Activated B cell treated with CpG ODN at 0.5 μM for 24 hours (primary cell): ENCODE measurements at regions of chr5 and their contacts with region 1.

Region 1: DNA sequence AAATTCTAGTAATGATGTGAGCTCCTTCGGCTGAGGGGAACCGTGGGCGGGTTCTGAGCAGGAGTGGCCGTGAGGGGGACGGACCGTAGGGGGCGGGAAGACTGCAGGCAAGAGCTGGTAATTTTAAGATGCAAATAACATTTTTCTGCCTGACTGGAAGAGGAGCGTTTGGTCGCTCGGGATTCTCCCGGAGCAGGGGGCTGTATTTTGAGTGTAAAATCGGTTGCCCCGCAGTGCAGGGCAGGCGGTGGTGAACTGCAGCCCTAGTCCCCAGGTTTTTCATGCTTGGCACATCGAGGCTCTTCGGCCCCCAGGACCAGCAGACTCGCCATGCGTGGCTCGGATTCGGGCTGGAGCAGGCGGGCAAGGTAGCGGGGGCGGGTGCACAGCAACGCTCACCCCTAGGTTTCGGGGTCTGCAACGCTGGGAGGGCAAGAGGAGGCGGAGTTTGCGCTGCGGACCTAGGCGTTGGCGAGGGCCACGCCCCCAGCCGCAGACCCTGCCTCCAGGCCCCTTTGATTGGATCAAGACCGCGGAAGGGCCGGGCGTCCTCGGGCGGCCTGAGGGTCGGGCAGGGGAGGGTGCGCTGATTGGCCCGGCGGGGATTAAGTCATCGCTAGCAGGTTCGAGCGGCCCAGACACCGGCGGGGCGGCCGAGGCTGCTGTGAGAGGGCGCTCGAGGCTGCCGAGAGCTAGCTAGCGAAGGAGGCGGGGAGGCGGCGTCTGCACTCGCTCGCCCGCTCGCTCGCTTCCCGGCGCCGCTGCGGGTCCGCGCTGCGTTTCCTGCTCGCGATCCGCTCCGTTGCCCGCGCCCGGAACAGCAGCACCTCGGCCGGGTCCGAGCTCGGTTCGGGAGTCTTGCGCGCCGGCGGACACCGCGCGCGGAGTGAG is at the start of gene ARHGAP26:
- DNase-seq: peak; percentile 89
- ATAC-seq: peak; percentile 95
- H3K4me3 Mint-ChIP-seq: peak within 1 kb of the TSS; percentile 97
- H3K27ac Mint-ChIP-seq: peak within 1 kb of the TSS; percentile 91
- H3K4me1 Mint-ChIP-seq: peaks cover 25% of the 10 kb centered on the region
- H3K27me3 Mint-ChIP-seq: no peaks in the 10 kb centered on the region
- CTCF ChIP-seq: no peak
- total RNA-seq, gene ARHGAP26: 14.0 and 20.9 TPM in 2 replicates

Region 2: GRCh38 chr5:142795251-142795650 is 25.3 kb after region 1 on chr5:
- CTCF ChIA-PET with region 1: interaction called, 11 read pairs
- POLR2A ChIA-PET with region 1: interaction called, 18 read pairs
- intact Hi-C with region 1: loop called (anchors 1 kb)
- DNase-seq: no peak
- ATAC-seq: peak; percentile 79
- H3K4me3 Mint-ChIP-seq: peak overlapping the region; percentile 33
- H3K27ac Mint-ChIP-seq: peak overlapping the region; percentile 87
- H3K4me1 Mint-ChIP-seq: peaks cover 81% of the 10 kb centered on the region
- H3K27me3 Mint-ChIP-seq: no peaks in the 10 kb centered on the region
- CTCF ChIP-seq: no peak

Region 3: GRCh38 chr5:142800776-142801494 is 30.9 kb after region 1 on chr5:
- CTCF ChIA-PET with region 1: interaction called, 11 read pairs
- POLR2A ChIA-PET with region 1: interaction called, 18 read pairs
- intact Hi-C with region 1: loop called (anchors 2 kb)
- DNase-seq: no peak
- ATAC-seq: peak; percentile 78
- H3K4me3 Mint-ChIP-seq: peak overlapping the region; percentile 64
- H3K27ac Mint-ChIP-seq: peak overlapping the region; percentile 84
- H3K4me1 Mint-ChIP-seq: peaks cover 63% of the 10 kb centered on the region
- H3K27me3 Mint-ChIP-seq: no peaks in the 10 kb centered on the region
- CTCF ChIP-seq: no peak

Region 4: DNA sequence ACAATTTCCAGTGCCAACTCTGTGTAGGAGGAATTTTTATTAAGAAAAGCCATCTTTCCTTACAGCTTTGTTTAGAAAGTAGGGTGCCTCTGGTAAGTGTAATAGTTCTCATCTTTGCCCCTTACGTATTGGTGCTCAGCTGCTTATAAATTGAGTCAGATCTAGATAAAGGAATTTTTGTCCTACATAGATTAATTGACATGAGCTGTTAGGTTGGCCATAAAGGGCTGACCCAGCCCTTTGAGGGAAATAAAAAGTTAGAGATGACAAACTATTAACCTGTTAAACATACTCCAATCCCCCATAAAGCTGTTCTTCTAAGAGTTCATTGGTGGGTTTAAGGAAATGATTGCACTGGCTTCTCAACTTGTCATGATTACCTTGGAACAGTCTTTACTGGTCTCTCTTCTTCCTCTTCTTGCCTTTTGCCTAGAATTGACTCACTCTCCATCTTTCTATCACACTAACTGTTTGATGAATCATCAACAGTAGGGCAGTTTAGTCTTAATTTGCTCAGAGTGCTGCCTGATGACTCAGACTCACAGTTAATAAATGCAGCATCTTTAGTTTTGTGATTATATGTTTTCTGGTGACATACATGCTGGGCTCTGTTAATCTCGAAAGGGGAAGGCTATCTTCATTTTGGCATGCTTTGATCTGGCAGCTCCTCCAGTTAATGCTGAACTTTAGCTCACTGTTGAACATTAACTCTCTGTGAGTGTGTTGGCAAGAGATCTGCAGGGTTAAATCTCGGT is 51.9 kb after region 1 on chr5:
- CTCF ChIA-PET with region 1: no interaction called
- POLR2A ChIA-PET with region 1: no interaction called
- intact Hi-C with region 1: loop called (anchors 1 kb)
- DNase-seq: no peak
- ATAC-seq: peak; percentile 95
- H3K4me3 Mint-ChIP-seq: no peak overlapping the region
- H3K27ac Mint-ChIP-seq: no peak overlapping the region
- H3K4me1 Mint-ChIP-seq: peaks cover 5% of the 10 kb centered on the region
- H3K27me3 Mint-ChIP-seq: no peaks in the 10 kb centered on the region
- CTCF ChIP-seq: no peak

Region 5: GRCh38 chr5:144170276-144171024 is 1400.5 kb after region 1 on chr5 and contains the starts of genes KCTD16 and YIPF5:
- CTCF ChIA-PET with region 1: no interaction called
- POLR2A ChIA-PET with region 1: no interaction called
- intact Hi-C with region 1: loop called (anchors 5 kb)
- DNase-seq: peak; percentile 91
- ATAC-seq: peak; percentile 98
- H3K4me3 Mint-ChIP-seq: peak within 1 kb of the TSS; percentile 90
- H3K27ac Mint-ChIP-seq: peak within 1 kb of the TSS; percentile 90
- H3K4me1 Mint-ChIP-seq: peaks cover 29% of the 10 kb centered on the region
- H3K27me3 Mint-ChIP-seq: peaks cover 3% of the 10 kb centered on the region
- CTCF ChIP-seq: no peak
- total RNA-seq, gene KCTD16: not detected in 2 replicates
- total RNA-seq, gene YIPF5: 28.0 and 29.4 TPM in 2 replicates

Region 6: DNA sequence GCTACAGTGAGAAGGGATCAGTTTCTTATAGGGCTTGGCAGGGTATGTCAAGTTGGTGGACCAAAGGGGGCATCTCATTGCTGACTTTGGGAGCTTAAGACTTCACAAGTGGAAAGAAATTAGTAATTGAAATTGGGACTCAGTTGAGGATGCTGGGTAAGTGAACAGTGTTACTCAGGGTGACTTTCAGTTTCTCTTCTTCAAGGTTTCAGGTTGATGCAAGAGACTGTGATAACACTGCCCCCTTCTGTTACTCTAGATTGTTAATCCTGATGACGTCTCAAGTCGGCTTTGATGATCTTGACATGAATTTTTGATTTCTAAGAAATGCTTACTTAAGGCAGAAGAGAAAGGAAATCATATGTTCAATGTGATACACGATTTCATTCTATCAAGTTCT is 1422.0 kb after region 1 on chr5:
- CTCF ChIA-PET with region 1: no interaction called
- POLR2A ChIA-PET with region 1: no interaction called
- intact Hi-C with region 1: loop called (anchors 2 kb)
- DNase-seq: no peak
- ATAC-seq: peak; percentile 75
- H3K4me3 Mint-ChIP-seq: no peak overlapping the region
- H3K27ac Mint-ChIP-seq: no peak overlapping the region
- H3K4me1 Mint-ChIP-seq: peaks cover 36% of the 10 kb centered on the region
- H3K27me3 Mint-ChIP-seq: no peaks in the 10 kb centered on the region
- CTCF ChIP-seq: no peak